HCT116 (cell line): ENCODE measurements at regions of chr2 and their contacts with region 1.

Region 1: DNA sequence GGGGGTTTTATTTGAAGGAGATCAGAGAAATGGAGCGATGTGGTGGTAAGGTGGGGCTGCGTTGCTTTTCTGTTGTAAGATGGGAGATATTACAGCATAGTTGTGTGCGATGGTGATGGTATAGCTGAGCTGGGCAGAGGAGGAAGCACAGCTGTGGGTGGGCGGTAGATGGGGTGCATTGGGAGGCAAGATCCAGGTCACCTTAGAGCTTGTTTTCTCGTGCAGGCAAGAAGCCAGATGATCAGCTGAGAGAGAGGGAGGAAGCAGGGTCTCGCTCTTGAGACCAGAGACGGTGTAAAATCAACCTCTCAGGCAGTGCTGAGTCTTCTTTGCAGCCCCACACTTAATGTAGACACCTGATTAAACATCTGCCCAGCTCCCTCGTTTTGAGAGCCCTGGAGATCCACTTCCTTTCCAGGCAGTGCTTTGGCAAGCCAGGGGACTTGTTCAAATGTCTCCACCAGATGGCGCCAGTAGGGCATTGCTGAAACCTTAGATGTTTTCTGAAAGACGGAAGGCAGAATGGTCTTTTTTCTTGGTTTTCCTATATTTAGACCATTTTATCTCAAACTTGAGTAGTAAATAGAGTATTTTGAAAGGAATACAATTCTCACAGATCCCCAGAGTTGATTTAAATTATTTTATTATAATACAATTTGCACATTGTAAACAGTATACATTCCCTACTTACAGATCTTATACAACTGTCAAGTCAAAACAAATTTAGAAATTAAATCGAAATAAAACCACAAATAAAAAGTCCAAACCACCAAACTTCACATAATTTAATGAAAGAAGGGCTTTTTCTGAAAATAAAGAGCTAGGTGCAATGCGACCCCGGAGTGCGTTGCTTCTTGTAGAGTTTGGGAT is 21.1 kb upstream of the LYPD6B start:
- DNase-seq: peak; percentile 54
- ATAC-seq: peak; percentile 91
- H3K4me3 ChIP-seq: no peak overlapping the region
- H3K27ac ChIP-seq: no peak overlapping the region
- H3K4me1 ChIP-seq: no peaks in the 10 kb centered on the region
- H3K27me3 ChIP-seq: no peaks in the 10 kb centered on the region
- CTCF ChIP-seq: peak; percentile 83 to 87 (median 86)
- POLR2A ChIP-seq: no peak
- RAD21 ChIP-seq: peak; percentile 88

Region 2: DNA sequence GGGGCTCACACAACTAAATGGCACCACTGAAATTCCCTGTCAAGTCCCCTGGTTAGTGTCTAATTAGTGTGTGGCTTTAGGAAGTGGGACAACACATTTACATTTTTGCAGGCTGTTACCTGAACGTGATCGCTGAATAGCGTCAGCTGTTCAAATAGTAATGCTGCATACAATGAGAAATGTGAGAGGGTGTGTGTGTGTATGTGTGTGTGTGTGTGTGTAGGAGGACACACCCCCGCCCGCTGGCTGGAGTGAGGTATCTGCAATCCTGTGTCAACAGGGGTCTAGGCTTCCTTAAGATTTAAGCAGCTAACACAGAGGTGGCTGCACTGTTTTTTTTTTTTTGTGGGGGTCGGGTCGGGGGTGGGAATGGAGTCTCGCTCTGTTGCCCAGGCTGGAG is 16.4 kb after region 1 on chr2:
- CTCF ChIA-PET with region 1: interaction called, 23 read pairs
- POLR2A ChIA-PET with region 1: no interaction called
- RAD21 ChIA-PET with region 1: interaction called, 3 to 8 read pairs
- intact Hi-C with region 1: no loop called
- DNase-seq: no peak
- ATAC-seq: no peak
- H3K4me3 ChIP-seq: no peak overlapping the region
- H3K27ac ChIP-seq: no peak overlapping the region
- H3K4me1 ChIP-seq: peaks cover 0 to 10% of the 10 kb centered on the region in 2 experiments; a peak in 2 of 4 replicates
- H3K27me3 ChIP-seq: peaks cover 5% of the 10 kb centered on the region; the same call in 1 of the 2 replicates
- CTCF ChIP-seq: no peak
- POLR2A ChIP-seq: no peak
- RAD21 ChIP-seq: no peak

Region 3: GRCh38 chr2:149040451-149040850 is 23.1 kb after region 1 on chr2:
- CTCF ChIA-PET with region 1: interaction called, 23 read pairs
- POLR2A ChIA-PET with region 1: no interaction called
- RAD21 ChIA-PET with region 1: interaction called, 3 to 8 read pairs
- intact Hi-C with region 1: no loop called
- DNase-seq: peak; percentile 42
- ATAC-seq: peak; percentile 20
- H3K4me3 ChIP-seq: no peak overlapping the region
- H3K27ac ChIP-seq: no peak overlapping the region
- H3K4me1 ChIP-seq: peaks cover 2 to 15% of the 10 kb centered on the region in 2 experiments; a peak in 2 of 4 replicates
- H3K27me3 ChIP-seq: no peaks in the 10 kb centered on the region
- CTCF ChIP-seq: peak; percentile 25 to 74 (median 64); a peak in 4 of 6 replicates
- POLR2A ChIP-seq: no peak
- RAD21 ChIP-seq: peak; percentile 48

Region 4: GRCh38 chr2:149313512-149313972 is 296.2 kb after region 1 on chr2:
- CTCF ChIA-PET with region 1: interaction called, 25 read pairs
- POLR2A ChIA-PET with region 1: no interaction called
- RAD21 ChIA-PET with region 1: interaction called in 1 of 2 experiments, 5 read pairs
- intact Hi-C with region 1: loop called (anchors 1 kb)
- DNase-seq: peak; percentile 40
- ATAC-seq: peak; percentile 97
- H3K4me3 ChIP-seq: peak overlapping the region; percentile 4; a peak in 1 of 4 replicates
- H3K27ac ChIP-seq: no peak overlapping the region
- H3K4me1 ChIP-seq: peaks cover 0 to 3% of the 10 kb centered on the region in 2 experiments; a peak in 1 of 4 replicates
- H3K27me3 ChIP-seq: no peaks in the 10 kb centered on the region
- CTCF ChIP-seq: peak; percentile 58 to 93 (median 92); a peak in 5 of 6 replicates
- POLR2A ChIP-seq: no peak
- RAD21 ChIP-seq: peak; percentile 73

Region 5: DNA sequence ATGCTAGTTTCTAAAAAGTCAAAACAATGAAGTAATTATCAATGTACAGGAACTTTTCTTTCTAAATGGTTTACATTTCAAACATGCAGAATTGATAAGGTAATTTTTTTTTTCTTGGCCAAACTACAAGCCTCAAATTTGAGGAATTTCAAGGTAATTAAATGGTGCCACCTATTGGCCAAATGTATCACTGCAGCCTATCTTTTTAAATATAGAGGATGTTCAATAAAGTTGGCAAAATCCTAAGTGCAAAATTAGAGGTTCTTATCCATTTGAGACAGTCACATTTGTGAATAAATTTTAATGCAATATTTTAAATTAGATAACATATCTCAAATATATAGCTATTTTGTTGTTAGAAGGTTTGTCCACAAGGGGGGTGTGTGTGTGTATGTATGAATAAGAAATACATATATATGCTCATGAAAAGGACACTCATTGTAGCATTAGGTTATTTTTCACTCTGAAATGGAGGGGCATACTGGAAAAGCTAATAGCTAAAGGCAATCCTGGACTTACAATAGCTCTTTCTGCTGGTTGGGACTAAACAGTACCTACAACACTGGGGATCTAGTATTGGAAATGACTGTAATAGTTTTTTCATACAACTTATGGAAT is 544.1 kb after region 1 on chr2:
- CTCF ChIA-PET with region 1: interaction called, 17 read pairs
- POLR2A ChIA-PET with region 1: no interaction called
- RAD21 ChIA-PET with region 1: interaction called in 1 of 2 experiments, 4 read pairs
- intact Hi-C with region 1: loop called (anchors 1 kb)
- DNase-seq: no peak
- ATAC-seq: no peak
- H3K4me3 ChIP-seq: no peak overlapping the region
- H3K27ac ChIP-seq: no peak overlapping the region
- H3K4me1 ChIP-seq: no peaks in the 10 kb centered on the region
- H3K27me3 ChIP-seq: no peaks in the 10 kb centered on the region
- CTCF ChIP-seq: peak; percentile 66 to 94 (median 79)
- POLR2A ChIP-seq: no peak
- RAD21 ChIP-seq: peak; percentile 82

Region 6: GRCh38 chr2:149573760-149574159 is 556.4 kb after region 1 on chr2:
- CTCF ChIA-PET with region 1: interaction called, 33 read pairs
- POLR2A ChIA-PET with region 1: no interaction called
- RAD21 ChIA-PET with region 1: no interaction called
- intact Hi-C with region 1: no loop called
- DNase-seq: no peak
- ATAC-seq: no peak
- H3K4me3 ChIP-seq: no peak overlapping the region
- H3K27ac ChIP-seq: no peak overlapping the region
- H3K4me1 ChIP-seq: no peaks in the 10 kb centered on the region
- H3K27me3 ChIP-seq: no peaks in the 10 kb centered on the region
- CTCF ChIP-seq: peak; percentile 11 to 50 (median 19); a peak in 4 of 6 replicates
- POLR2A ChIP-seq: no peak
- RAD21 ChIP-seq: no peak; the same call in 1 of the 2 replicates